Tibial artery (tissue), 4 donors: ENCODE measurements at regions of chr3 and their contacts with region 1.

Region 1: GRCh38 chr3:64030741-64031140 is 7.4 kb upstream of the PSMD6 start:
- DNase-seq: peak; percentile 41 to 78
- H3K4me3 ChIP-seq: peak overlapping the region; percentile 20 to 41
- H3K27ac ChIP-seq: no peak overlapping the region
- H3K4me1 ChIP-seq: peaks cover 0 to 10% (median 4%) of the 10 kb centered on the region in 4 donors
- H3K27me3 ChIP-seq: peaks cover 0 to 2% of the 10 kb centered on the region in 2 donors
- CTCF ChIP-seq: peak; percentile 86 to 95

Region 2: GRCh38 chr3:63980835-63981498 is 49.8 kb before region 1 on chr3:
- intact Hi-C with region 1: no loop called
- DNase-seq: no peak
- H3K4me3 ChIP-seq: no peak overlapping the region
- H3K27ac ChIP-seq: no peak overlapping the region
- H3K4me1 ChIP-seq: peaks cover 0 to 33% (median 12%) of the 10 kb centered on the region in 4 donors
- H3K27me3 ChIP-seq: no peaks in the 10 kb centered on the region
- CTCF ChIP-seq: no peak

Region 3: GRCh38 chr3:64150623-64151207 is 120.0 kb after region 1 on chr3:
- intact Hi-C with region 1: loop called (anchors 10 kb)
- DNase-seq: peak; percentile 29 to 87
- H3K4me3 ChIP-seq: no peak overlapping the region
- H3K27ac ChIP-seq: peak overlapping the region; percentile 77 to 80
- H3K4me1 ChIP-seq: peaks cover 0 to 46% (median 19%) of the 10 kb centered on the region in 4 donors
- H3K27me3 ChIP-seq: no peaks in the 10 kb centered on the region
- CTCF ChIP-seq: no peak

Region 4: DNA sequence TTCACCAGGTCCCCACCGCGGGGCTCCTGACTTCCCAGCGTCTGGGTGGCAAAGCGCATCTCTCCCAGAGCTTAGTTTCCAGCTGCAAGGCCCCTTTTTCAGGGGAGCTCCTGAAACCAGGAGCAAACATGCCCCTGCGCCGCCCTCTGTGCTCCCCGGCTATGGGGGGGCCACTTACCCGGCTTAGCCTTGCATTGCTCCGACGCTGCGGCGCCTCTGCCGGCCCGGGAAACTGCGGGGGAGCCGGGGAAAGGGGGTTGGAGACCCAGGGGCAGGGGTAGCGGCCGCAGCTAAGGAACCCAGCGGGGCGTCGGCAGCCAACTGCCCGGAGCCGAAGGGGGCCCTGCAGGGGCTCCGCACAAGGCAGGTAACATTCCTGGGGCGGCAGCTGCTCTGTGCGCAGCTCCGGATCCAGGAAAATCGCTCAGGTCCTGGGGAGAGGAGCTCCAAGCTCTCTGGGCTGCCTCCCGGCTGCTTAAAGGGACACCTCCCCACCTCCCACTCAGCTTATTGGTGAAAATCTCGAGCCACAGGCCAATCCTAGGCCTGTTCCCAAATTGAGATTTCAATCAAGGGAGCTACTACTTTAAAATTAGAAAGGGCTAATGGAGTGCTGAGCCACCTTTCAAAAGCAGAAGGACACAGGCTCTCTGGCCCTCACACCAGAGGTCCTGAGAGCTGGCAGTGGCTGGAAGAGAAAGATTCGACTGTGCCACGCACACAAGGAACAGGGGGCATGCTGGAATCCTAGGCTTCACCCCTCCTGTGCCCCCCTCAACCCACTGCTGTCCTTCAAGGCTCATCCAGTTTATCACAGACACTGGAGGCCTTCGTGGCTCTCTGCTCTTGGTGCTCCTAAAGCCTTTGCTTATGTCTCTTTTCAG is 237.2 kb after region 1 on chr3:
- intact Hi-C with region 1: loop called (anchors 10 kb)
- DNase-seq: peak; percentile 78 to 87
- H3K4me3 ChIP-seq: peak overlapping the region; percentile 83 to 85
- H3K27ac ChIP-seq: peak overlapping the region; percentile 91
- H3K4me1 ChIP-seq: peaks cover 0 to 38% (median 26%) of the 10 kb centered on the region in 4 donors
- H3K27me3 ChIP-seq: no peaks in the 10 kb centered on the region
- CTCF ChIP-seq: peak in 1 of 2 experiments; percentile 7

Region 5: GRCh38 chr3:64399205-64399800 is 368.6 kb after region 1 on chr3:
- intact Hi-C with region 1: loop called (anchors 2 kb)
- DNase-seq: no peak
- H3K4me3 ChIP-seq: no peak overlapping the region
- H3K27ac ChIP-seq: no peak overlapping the region
- H3K4me1 ChIP-seq: no peaks in the 10 kb centered on the region
- H3K27me3 ChIP-seq: no peaks in the 10 kb centered on the region
- CTCF ChIP-seq: peak; percentile 74 to 80

Region 6: GRCh38 chr3:64482076-64482475 is 451.3 kb after region 1 on chr3:
- intact Hi-C with region 1: loop called (anchors 2 kb)
- DNase-seq: no peak
- H3K4me3 ChIP-seq: no peak overlapping the region
- H3K27ac ChIP-seq: no peak overlapping the region
- H3K4me1 ChIP-seq: peaks cover 0 to 6% (median 2%) of the 10 kb centered on the region in 4 donors
- H3K27me3 ChIP-seq: no peaks in the 10 kb centered on the region
- CTCF ChIP-seq: no peak